ENCODE measurements at regions of chr7 and their contacts with region 1.

Region 1: DNA sequence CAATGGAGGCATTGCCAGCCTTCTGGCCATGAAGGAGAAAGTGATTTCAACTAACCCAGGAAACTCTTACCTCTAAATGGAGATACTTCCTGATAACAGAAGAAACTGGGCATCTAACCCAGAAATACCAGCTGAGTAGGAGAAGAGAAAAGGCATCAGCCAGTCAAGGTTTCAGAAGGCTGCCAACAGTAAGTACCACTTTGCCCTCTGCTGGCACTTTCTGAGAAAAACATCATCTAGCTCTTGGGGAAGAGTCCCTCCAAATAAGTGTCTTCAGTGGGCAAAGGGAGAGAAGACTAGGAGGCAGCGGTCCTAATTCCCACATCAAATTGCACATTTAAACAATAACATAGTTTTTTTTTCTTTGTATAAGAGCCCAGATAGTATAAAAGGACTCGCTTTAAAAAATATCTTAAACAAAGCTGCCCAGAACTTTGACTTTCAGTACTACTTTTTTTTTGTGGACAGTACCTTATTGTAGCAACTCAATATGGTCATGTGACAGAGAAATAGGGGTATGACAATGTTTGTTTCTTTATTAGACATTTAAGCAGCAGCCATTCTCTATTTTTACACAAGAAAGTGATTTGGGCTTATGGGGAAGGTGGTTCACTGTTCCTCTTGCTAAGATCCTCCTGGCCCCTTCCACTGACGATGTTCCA is 157.3 kb downstream of the CTTNBP2 start:
- DNase-seq: no peak
- H3K4me3 Mint-ChIP-seq: no peak overlapping the region
- H3K27ac Mint-ChIP-seq: no peak overlapping the region
- H3K4me1 Mint-ChIP-seq: peaks cover 3% of the 10 kb centered on the region
- H3K27me3 Mint-ChIP-seq: peaks cover 4% of the 10 kb centered on the region

Region 2: DNA sequence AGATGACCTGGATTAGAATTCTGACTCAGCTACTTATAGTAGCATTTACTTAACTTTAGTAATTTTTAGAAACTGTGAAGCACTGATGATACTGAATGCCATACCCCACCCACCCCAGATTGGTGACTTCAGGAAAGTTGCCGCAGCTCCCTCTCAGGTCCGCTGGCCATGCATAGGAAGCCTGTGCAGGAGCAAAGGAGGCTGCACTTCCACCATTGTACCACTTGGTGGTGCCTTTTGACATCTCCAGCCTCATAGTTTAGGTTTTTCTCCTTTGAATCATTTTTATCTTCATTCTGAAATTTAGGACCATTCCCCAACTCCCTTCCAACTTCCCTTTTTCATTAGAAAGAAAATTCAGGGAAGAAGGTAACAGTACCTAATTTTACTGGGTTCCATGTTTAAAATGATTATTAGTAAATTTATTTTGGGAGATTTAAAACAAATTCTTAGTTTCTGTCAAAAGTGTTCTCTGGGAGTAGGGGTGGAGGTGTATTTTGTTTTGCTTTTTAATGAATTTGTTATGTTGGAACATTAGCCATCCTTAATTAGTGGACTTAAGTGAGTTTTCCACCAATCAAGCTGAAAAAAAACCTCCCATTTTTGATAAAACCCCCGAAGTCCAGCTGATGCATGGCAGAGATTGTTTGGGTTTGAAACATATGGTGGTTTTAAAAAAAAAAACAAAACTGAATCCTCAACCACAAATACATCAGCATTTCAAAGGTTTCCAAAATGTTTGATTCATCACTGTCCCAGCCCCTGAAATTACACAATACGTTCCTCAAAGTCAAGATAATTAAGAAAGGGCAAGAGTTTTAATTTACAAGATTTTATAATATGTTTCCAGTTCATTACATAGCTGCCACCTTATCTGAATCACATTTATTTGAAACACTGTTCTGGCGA is 502.7 kb before region 1 on chr7:
- intact Hi-C with region 1: loop called (anchors 5 kb)
- DNase-seq: peak; percentile 16
- H3K4me3 Mint-ChIP-seq: no peak overlapping the region
- H3K27ac Mint-ChIP-seq: no peak overlapping the region
- H3K4me1 Mint-ChIP-seq: peaks cover 2% of the 10 kb centered on the region
- H3K27me3 Mint-ChIP-seq: no peaks in the 10 kb centered on the region

Region 3: GRCh38 chr7:117399820-117400422 is 316.0 kb before region 1 on chr7:
- intact Hi-C with region 1: loop called (anchors 5 kb)
- DNase-seq: no peak
- H3K4me3 Mint-ChIP-seq: no peak overlapping the region
- H3K27ac Mint-ChIP-seq: no peak overlapping the region
- H3K4me1 Mint-ChIP-seq: no peaks in the 10 kb centered on the region
- H3K27me3 Mint-ChIP-seq: no peaks in the 10 kb centered on the region

Region 4: GRCh38 chr7:117458977-117459583 is 256.8 kb before region 1 on chr7:
- intact Hi-C with region 1: loop called (anchors 2 kb)
- DNase-seq: no peak
- H3K4me3 Mint-ChIP-seq: no peak overlapping the region
- H3K27ac Mint-ChIP-seq: no peak overlapping the region
- H3K4me1 Mint-ChIP-seq: no peaks in the 10 kb centered on the region
- H3K27me3 Mint-ChIP-seq: peaks cover 2% of the 10 kb centered on the region

Region 5: DNA sequence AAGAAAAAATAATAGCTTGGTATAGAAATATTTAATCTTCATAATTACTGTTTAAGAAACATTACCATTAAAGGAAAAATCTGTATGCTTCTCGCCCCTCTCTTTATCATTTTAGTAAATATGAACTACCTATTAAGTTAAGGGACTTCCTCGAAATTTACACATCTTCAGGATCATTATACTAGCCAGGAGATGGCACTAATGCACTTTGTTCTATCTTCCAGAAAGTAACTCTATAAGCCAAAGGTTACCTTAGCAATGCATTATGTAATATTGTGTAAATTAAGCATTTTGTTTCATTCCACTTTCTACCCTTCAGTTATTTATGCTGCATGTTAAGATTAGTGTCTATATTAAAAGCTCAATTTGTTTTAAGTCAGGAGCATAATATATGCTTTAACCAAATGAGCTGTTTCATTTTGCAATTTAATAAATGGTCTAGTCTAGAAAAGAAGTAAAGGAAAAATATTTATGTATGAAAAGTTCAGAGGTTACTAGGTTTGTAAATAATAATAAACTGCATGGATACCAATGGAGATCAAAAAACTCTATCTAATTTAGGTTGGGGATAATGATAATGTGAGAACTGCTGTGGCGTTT is 637.0 kb after region 1 on chr7:
- intact Hi-C with region 1: no loop called
- DNase-seq: no peak
- H3K4me3 Mint-ChIP-seq: no peak overlapping the region
- H3K27ac Mint-ChIP-seq: no peak overlapping the region
- H3K4me1 Mint-ChIP-seq: peaks cover 12% of the 10 kb centered on the region
- H3K27me3 Mint-ChIP-seq: no peaks in the 10 kb centered on the region

Measured in activated T-helper 2 cell treated with anti-CD3 and anti-CD28 coated beads, Interferon-gamma antibody, Interleukin-2, Interleukin-4, amounts not matched to agents 10 μg/mL and 5 μg/mL and 100 μg/mL, durations not matched to agents 14 hours and 24 hours and 36 hours (primary cell).